Panc1 (cell line): ENCODE measurements at regions of chrX and their contacts with region 1.

Region 1: GRCh38 chrX:9966775-9967408 is at the start of gene CLDN34:
- DNase-seq: no peak
- ATAC-seq: no peak
- H3K4me3 ChIP-seq: no peak within 1 kb of the TSS
- H3K27ac ChIP-seq: no peak within 1 kb of the TSS
- H3K4me1 ChIP-seq: no peaks in the 10 kb centered on the region
- H3K27me3 ChIP-seq: no peaks in the 10 kb centered on the region
- CTCF ChIP-seq: peak; percentile 42
- total RNA-seq, gene CLDN34: not detected

Region 2: DNA sequence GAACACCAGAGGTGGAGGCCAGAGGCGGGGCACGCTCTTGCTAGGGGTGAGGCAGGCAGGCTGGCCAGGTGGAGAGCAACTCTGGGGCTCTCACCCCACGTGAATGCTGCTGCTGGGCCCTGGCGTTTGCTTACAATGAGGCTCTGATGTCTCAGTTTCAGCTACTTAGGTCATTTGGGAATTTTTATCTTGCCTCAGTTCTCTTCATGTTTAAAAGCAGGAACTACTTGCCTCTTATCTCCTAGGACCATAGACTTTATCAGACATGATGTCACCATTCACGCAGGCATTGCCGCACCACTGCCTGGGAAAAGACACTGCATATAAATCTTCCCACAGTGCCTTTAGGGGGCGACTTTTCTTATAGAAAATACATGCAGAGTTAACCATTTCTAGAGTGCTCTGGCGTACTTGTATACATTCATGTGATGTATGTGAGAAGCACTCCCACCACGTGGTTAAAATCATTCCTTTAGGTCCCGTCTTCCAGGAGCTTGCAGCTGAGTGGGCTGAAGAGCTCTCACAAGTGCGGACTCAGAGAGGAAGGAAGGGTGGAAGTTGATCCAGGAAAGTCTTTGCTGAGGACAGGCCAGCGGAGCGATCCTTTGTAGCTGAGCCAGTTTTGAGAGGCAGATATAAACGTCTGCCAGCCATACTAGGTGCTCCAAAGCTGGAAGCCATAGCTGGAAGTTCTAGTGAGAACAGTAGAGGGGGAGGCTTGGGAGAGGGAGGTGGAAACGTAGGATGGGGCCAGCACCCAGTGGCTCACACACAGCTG is 84.0 kb before region 1 on chrX:
- CTCF ChIA-PET with region 1: no interaction called
- POLR2A ChIA-PET with region 1: no interaction called
- in situ Hi-C with region 1: no loop called
- intact Hi-C with region 1: loop called (anchors 2 kb)
- DNase-seq: no peak
- ATAC-seq: no peak
- H3K4me3 ChIP-seq: no peak overlapping the region
- H3K27ac ChIP-seq: no peak overlapping the region
- H3K4me1 ChIP-seq: no peaks in the 10 kb centered on the region
- H3K27me3 ChIP-seq: no peaks in the 10 kb centered on the region
- CTCF ChIP-seq: peak; percentile 33

Region 3: DNA sequence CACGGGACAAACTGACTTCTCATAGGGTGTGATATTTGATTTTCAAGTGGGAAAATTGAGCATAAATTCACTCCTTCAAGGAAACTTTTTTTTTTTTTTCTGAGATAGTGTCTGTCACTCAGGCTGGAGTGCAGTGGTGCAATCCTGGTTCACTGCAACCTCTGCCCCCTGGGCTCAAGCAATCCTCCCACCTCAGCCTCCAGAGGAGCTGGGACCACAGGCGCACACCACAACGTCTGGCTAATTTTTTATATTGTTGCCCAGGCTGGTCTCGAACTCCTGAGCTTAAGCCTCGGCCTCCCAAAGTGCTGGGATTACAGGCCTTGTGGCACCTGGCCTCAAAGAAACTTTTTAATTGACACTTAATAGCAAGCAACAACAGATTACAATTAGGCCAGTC is 14.0 kb after region 1 on chrX:
- CTCF ChIA-PET with region 1: no interaction called
- POLR2A ChIA-PET with region 1: no interaction called
- in situ Hi-C with region 1: no loop called
- intact Hi-C with region 1: no loop called
- DNase-seq: no peak
- ATAC-seq: no peak
- H3K4me3 ChIP-seq: no peak overlapping the region
- H3K27ac ChIP-seq: no peak overlapping the region
- H3K4me1 ChIP-seq: no peaks in the 10 kb centered on the region
- H3K27me3 ChIP-seq: no peaks in the 10 kb centered on the region
- CTCF ChIP-seq: no peak